ENCODE measurements at regions of chr12 and their contacts with region 1.

Region 1: GRCh38 chr12:93677195-93678064 is at the start of gene CRADD:
- DNase-seq: peak; percentile 86
- H3K4me3 Mint-ChIP-seq: peak within 1 kb of the TSS; percentile 85
- H3K27ac Mint-ChIP-seq: peak within 1 kb of the TSS; percentile 96
- H3K4me1 Mint-ChIP-seq: peaks cover 38% of the 10 kb centered on the region
- H3K27me3 Mint-ChIP-seq: no peaks in the 10 kb centered on the region
- total RNA-seq, gene CRADD: 11.2 and 12.3 TPM in 2 replicates

Region 2: DNA sequence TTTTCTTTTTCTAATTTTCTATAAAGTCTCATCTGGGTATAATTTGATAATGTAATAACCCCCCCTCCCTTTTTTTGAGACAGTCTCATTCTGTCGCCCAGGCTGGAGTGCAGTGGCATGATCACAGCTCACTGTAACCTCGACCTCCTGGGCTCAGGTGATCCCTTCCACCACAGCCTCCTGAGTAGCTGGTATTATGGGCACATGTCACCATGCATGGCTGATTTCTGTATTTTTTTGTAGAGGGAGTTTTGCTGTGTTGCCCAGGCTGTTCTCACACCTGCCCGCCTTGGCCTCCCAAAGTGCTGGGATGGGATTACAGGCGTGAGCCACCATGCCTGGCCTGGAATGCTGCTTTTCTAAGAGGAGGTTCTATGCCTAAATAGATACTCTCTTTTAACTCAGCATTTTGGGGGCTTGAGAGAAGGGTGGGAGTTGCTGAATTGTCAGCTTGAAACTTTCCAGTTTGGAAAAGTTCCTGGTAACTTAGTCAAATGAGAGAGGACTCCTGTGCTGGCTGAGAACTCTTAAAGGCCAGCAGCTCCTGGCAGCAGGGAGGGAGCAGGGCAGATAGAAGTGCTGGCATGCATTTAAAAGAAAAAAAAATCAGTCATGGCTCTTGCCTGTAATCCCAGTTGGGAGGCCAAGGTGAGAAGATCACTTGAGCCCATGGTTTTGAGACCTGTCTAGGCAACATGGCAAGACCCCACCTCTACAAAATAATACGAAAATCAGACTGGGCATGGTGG is 286.7 kb before region 1 on chr12:
- intact Hi-C with region 1: no loop called
- DNase-seq: no peak
- H3K4me3 Mint-ChIP-seq: no peak overlapping the region
- H3K27ac Mint-ChIP-seq: no peak overlapping the region
- H3K4me1 Mint-ChIP-seq: peaks cover 22% of the 10 kb centered on the region
- H3K27me3 Mint-ChIP-seq: no peaks in the 10 kb centered on the region

Region 3: DNA sequence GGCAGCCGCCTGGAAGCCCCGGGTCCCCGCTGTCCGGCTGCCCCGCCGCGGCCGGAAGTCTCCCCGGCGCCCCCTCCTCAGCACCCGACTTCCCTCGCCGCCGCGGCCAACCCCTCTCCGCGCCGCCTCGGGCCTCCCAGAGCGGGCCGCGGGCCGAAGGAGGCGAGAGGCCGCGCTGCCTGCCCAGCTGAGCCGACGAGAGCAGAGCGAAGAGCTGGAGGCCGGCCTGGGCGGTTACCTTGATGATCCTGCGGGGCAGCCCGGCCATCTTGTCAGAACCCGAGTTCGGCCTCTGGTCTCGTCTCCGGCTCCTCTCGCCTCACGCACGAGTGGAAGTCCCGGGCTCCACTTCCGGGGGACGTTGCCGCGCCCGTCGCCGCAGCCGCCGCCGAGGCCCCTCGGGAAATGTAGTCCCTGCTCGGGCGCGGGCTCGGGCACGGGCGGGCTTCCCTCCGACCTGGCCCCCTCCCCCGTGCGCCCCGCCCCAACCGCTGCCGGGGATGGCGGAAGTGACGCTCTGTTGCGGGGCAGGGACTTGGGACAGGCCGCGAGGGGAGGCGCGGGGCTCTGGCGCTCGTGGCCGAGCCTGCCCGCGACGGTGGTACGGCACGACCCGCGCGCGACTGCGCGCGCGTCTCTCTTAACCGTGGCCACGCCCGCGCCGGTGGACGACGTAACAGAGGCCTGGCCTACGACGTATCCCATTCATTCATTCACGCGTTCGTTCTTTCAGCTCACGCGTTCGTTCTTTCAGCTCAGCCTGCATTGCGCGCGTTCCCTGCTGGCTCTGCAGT is 235.6 kb before region 1 on chr12 and contains the start of gene UBE2N:
- intact Hi-C with region 1: loop called (anchors 1 kb)
- DNase-seq: peak; percentile 95
- H3K4me3 Mint-ChIP-seq: peak within 1 kb of the TSS; percentile 96
- H3K27ac Mint-ChIP-seq: peak within 1 kb of the TSS; percentile 99
- H3K4me1 Mint-ChIP-seq: peaks cover 51% of the 10 kb centered on the region
- H3K27me3 Mint-ChIP-seq: no peaks in the 10 kb centered on the region
- total RNA-seq, gene UBE2N: 231 and 239 TPM in 2 replicates

Region 4: DNA sequence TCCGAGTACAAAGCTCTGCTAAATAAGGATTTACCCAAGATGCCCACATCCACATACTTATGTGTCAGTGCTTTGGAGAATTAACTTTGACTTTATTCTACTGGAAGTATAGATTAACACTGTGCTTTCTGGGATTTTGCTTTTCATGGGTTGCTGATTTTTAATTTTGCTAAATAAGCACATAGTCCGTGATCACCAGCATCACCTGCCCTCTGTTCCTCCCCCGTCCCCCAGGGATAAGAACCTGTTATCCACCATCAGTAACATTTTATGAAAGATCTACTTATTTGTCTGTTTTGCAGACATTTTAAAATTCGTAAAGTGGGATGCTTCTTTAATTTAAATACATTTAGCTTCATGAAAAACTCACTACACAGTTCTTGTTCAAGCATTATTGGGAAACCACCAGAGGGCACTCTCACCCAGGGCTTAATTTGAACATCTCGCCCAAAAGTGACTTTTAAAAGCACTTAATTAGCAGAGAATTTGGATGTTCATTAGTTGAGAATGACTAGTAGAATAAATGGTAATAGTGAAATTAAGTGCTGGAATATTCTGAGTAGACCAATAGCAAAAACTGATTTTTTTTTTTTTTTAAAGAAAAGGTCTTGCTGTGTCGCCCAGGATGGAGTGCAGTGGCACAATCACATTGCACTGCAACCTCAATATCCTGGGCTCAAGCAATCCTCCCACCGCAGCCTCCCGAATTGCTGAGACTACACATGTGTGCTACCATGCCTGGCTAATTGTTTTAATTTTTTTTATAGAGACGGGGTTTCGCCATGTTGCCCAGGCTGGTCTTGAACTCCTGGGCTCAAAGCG is 174.4 kb before region 1 on chr12:
- intact Hi-C with region 1: loop called (anchors 2 kb)
- DNase-seq: peak; percentile 42
- H3K4me3 Mint-ChIP-seq: no peak overlapping the region
- H3K27ac Mint-ChIP-seq: no peak overlapping the region
- H3K4me1 Mint-ChIP-seq: peaks cover 32% of the 10 kb centered on the region
- H3K27me3 Mint-ChIP-seq: no peaks in the 10 kb centered on the region

Region 5: DNA sequence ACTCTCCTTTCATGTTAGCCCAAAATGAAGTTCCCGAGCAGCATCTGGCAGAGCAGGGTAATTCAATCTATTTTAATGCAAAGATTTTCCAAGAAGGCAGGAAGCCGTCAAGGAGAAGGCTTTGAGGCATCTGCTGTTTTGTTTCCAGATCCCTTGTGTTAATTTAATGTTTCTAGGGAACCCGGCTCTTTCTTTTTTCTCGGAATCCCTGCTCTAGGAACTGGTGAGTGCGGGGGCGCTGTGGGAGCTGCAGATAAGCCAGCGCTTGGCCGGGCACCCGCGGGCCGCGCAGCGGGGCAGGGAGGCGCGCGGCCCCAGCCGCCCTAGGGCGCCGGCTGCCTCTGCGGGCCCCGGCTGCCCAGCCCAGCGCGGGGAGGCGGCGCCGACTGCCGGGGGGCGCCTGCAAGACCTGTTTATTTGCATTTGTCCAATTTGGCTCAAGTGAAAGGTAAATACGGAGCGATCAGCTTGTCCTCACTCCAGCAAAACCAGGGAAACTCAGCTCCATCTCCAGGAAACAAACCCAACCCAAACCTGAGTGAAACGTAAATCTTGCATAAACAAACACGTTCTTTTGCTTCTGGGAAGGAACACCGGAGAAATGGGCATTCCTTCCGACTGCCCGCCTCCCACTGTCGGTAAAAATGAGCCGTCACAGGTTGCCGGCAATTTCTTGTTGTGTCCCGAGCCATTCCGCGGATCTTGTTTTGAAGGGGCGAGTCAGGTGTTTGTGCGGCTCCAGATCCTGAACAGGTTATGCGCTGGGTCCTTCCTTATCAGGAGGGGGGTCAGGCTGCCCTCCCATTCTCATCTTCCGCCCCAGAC is 64.9 kb after region 1 on chr12:
- intact Hi-C with region 1: loop called (anchors 1 kb)
- DNase-seq: peak; percentile 40
- H3K4me3 Mint-ChIP-seq: peak overlapping the region; percentile 86
- H3K27ac Mint-ChIP-seq: peak overlapping the region; percentile 86
- H3K4me1 Mint-ChIP-seq: peaks cover 50% of the 10 kb centered on the region
- H3K27me3 Mint-ChIP-seq: peaks cover 2% of the 10 kb centered on the region

Region 6: GRCh38 chr12:93879476-93880421 is 202.3 kb after region 1 on chr12:
- intact Hi-C with region 1: loop called (anchors 10 kb)
- DNase-seq: no peak
- H3K4me3 Mint-ChIP-seq: peak overlapping the region; percentile 23
- H3K27ac Mint-ChIP-seq: peak overlapping the region; percentile 95
- H3K4me1 Mint-ChIP-seq: peaks cover 35% of the 10 kb centered on the region
- H3K27me3 Mint-ChIP-seq: no peaks in the 10 kb centered on the region

Measured in activated T-helper 1 cell treated with anti-CD3 and anti-CD28 coated beads, Interleukin-12 subunit alpha, Interleukin-12 subunit beta, Interleukin-2, Interleukin-4 antibody, amounts not matched to agents 30 ng/mL and 10 ng/mL and 1 ng/mL, durations not matched to agents 14 hours and 24 hours and 36 hours (primary cell).